ENCODE measurements at regions of chr9 and their contacts with region 1.

Region 1: DNA sequence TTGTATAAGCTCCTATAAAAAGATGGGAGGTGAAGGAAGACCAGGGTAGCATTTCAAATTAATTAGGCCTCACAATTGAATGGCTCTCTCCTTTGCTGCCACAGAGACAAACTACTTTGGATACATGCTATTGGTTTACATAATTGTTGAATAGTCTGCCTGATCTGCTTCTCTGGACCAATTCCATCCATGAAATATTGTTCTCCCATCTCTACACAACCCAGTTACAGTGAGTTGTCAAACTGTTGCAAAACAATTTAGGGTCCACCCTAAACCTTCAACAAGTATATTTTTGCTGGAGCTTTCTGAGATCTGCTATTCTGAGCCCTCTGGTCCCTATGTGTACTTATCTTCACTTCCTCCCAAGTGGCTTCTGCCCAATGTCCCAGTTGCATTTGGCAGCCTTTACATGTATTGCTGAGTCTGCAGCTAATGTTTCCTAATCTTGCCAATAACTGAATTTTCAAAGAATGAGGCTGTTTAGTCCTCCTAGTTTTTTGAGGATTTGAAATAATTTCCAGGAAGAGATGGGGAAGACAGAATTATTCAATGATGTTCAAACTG is 38.9 kb downstream of the AGTPBP1 start:
- DNase-seq: no peak
- ATAC-seq: no peak
- H3K4me3 ChIP-seq: no peak overlapping the region
- H3K27ac ChIP-seq: no peak overlapping the region
- H3K4me1 ChIP-seq: no peaks in the 10 kb centered on the region
- H3K27me3 ChIP-seq: no peaks in the 10 kb centered on the region
- CTCF ChIP-seq: no peak
- POLR2A ChIP-seq: no peak
- RAD21 ChIP-seq: no peak

Region 2: GRCh38 chr9:85688361-85688760 is 14.4 kb before region 1 on chr9:
- CTCF ChIA-PET with region 1: interaction called, 12 read pairs
- POLR2A ChIA-PET with region 1: no interaction called
- RAD21 ChIA-PET with region 1: no interaction called
- intact Hi-C with region 1: no loop called
- DNase-seq: no peak
- ATAC-seq: no peak
- H3K4me3 ChIP-seq: no peak overlapping the region
- H3K27ac ChIP-seq: no peak overlapping the region
- H3K4me1 ChIP-seq: no peaks in the 10 kb centered on the region
- H3K27me3 ChIP-seq: no peaks in the 10 kb centered on the region
- CTCF ChIP-seq: no peak
- POLR2A ChIP-seq: no peak
- RAD21 ChIP-seq: no peak

Region 3: GRCh38 chr9:85715587-85715986 is 12.8 kb after region 1 on chr9:
- CTCF ChIA-PET with region 1: interaction called, 10 read pairs
- POLR2A ChIA-PET with region 1: no interaction called
- RAD21 ChIA-PET with region 1: no interaction called
- intact Hi-C with region 1: no loop called
- DNase-seq: no peak
- ATAC-seq: no peak
- H3K4me3 ChIP-seq: no peak overlapping the region
- H3K27ac ChIP-seq: no peak overlapping the region
- H3K4me1 ChIP-seq: no peaks in the 10 kb centered on the region
- H3K27me3 ChIP-seq: no peaks in the 10 kb centered on the region
- CTCF ChIP-seq: no peak
- POLR2A ChIP-seq: no peak
- RAD21 ChIP-seq: no peak

Region 4: DNA sequence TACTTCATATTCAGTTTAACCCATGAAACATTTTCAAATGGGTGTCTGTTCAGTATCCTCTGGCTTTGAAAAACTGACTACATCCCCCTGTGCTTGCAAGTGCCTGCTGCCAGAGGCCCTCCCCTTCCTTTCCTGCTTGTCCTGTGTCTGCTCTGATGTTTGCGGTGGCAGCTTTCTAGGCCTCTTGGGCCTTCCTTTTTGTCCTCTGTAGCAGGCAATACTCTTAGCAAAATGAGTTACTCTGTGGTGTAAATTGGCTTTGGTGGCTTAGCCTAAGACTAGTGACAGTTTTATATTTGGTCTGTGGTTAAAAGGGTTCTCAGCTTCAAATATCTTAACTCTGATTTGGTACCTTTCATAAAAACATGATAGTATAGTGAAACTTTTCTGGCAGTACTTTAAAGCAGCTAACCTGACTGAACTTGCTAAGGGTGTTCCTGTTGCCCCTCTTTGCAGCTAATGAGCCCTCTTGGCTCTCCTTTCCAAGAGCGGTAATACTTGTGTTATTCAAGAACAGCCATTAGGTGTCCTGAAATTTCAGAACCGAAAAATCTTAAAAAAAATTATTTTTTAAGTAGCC is 320.0 kb after region 1 on chr9:
- CTCF ChIA-PET with region 1: no interaction called
- POLR2A ChIA-PET with region 1: no interaction called
- RAD21 ChIA-PET with region 1: no interaction called
- intact Hi-C with region 1: no loop called
- DNase-seq: no peak
- ATAC-seq: no peak
- H3K4me3 ChIP-seq: no peak overlapping the region
- H3K27ac ChIP-seq: no peak overlapping the region
- H3K4me1 ChIP-seq: no peaks in the 10 kb centered on the region
- H3K27me3 ChIP-seq: no peaks in the 10 kb centered on the region
- CTCF ChIP-seq: no peak
- POLR2A ChIP-seq: no peak
- RAD21 ChIP-seq: no peak

Region 5: DNA sequence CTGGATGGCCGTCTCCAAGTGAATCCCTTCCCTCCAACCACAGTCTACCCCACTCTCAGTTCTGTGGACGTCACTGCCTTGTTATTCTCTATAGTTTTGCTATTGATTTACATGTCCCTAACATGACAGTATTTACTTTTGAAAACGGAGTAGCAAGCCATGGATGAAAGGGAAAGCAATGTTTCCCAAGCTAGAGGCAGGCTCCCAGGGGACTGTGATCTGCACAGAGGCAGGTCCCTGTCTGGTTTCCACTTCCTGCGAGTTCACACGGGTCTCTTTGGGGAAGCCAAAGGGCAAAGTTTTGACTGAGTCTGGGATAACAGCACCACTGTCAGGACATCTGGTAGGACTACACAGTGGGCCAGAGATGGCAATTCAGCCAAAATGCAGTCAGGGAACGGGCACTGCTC is 543.9 kb after region 1 on chr9:
- CTCF ChIA-PET with region 1: no interaction called
- POLR2A ChIA-PET with region 1: no interaction called
- RAD21 ChIA-PET with region 1: no interaction called
- intact Hi-C with region 1: no loop called
- DNase-seq: no peak
- ATAC-seq: peak; percentile 50; the same call in 1 of the 2 replicates
- H3K4me3 ChIP-seq: no peak overlapping the region
- H3K27ac ChIP-seq: no peak overlapping the region
- H3K4me1 ChIP-seq: no peaks in the 10 kb centered on the region
- H3K27me3 ChIP-seq: no peaks in the 10 kb centered on the region
- CTCF ChIP-seq: no peak
- POLR2A ChIP-seq: no peak
- RAD21 ChIP-seq: peak; percentile 27; the same call in 1 of the 2 replicates